ENCODE measurements at regions of chr3 and their contacts with region 1.

Region 1: DNA sequence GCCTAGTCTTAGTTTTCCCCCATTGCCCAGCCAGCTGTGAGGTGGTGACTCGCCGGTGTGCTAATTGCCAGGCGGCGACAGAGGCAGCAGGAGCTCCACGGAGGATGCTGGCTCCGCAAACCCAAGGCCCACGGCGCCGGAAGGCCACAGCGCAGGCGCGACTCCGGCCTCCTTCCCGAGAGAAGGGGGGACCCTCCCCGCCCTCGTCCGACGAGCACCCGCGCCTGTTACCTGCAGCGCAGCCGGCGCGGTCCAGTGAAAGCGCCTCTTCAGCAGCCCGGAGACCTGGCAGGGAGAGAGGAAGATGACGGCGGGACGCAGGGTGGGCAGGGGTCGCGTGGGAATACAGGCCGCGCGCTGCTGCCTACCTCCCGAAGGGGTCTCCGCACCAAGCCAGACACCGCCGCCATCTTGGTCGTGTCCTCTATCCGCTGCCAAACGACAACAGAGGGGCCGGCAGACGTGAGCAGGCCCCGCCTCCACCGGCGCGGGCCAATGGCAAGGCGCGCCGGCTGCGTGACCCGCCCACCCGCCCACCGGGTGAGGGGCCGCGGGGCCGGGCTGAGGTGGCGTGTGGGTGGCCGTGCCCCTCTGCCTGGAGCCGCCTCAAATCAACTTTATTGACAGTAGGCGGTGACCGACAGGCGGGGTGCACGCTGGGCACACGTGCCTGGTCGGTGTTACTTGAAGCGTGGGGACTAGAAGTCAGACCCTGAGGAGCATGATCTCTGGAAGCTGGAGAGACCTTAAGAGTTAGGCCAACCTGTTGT is at the start of gene PDHB:
- DNase-seq: peak; percentile 89
- H3K4me3 Mint-ChIP-seq: peak within 1 kb of the TSS; percentile 88
- H3K27ac Mint-ChIP-seq: peak within 1 kb of the TSS; percentile 91
- H3K4me1 Mint-ChIP-seq: peaks cover 29% of the 10 kb centered on the region
- H3K27me3 Mint-ChIP-seq: no peaks in the 10 kb centered on the region
- total RNA-seq, gene PDHB: 62.0 and 68.1 TPM in 2 replicates

Region 2: GRCh38 chr3:58008140-58009025 is 425.2 kb before region 1 on chr3 and contains the start of gene FLNB:
- intact Hi-C with region 1: loop called (anchors 10 kb)
- DNase-seq: peak; percentile 65
- H3K4me3 Mint-ChIP-seq: peak within 1 kb of the TSS; percentile 85
- H3K27ac Mint-ChIP-seq: peak within 1 kb of the TSS; percentile 70
- H3K4me1 Mint-ChIP-seq: peaks cover 39% of the 10 kb centered on the region
- H3K27me3 Mint-ChIP-seq: peaks cover 2% of the 10 kb centered on the region
- total RNA-seq, gene FLNB: 22.3 and 24.1 TPM in 2 replicates

Region 3: DNA sequence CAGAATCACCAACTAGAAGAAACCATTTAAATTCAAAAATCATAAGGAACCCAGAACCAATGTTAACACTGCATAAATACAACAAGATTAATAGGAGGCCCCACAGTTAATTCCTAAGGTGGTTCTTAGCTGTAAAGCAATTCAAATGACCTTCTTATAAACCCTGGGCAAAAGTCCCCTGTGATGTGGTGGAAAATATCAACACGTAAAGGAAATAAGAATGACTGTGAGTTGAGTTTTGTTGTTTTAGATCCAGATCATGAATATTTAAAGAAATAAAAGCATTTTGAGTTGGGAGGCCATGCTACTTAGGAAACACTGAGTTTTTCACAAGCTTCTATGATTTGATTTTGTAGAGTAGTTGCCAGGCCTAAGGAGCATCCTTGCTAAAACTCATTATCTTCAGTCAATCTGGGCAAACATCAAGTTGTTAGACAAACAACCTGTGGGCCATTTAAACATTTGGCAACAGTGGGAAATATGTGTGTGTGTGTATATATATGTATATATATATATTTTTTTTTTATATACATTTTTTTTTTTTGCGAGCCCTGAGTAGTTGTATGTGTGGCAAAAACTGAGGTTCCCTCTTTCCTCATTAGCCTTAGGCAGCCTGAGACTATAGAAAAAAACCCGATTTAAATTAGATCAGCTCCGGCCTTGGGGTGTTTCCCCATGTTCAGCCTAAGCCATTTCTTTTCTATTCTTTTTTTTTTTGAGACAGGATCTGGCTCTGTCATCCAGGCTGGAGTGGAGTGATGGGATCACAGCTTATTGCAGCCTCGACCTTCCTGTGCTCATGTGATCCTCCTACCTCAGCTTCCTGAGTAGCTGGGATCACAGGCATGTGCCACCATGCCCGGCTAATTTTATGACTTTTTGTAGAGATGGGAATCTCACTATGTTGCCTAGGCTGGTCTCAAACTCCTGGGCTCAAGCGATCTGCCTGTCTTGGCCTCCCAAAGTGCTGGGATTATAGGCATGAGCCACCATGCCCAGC is 108.9 kb before region 1 on chr3:
- intact Hi-C with region 1: loop called (anchors 1 kb)
- DNase-seq: peak; percentile 6
- H3K4me3 Mint-ChIP-seq: peak overlapping the region; percentile 6
- H3K27ac Mint-ChIP-seq: peak overlapping the region; percentile 86
- H3K4me1 Mint-ChIP-seq: peaks cover 31% of the 10 kb centered on the region
- H3K27me3 Mint-ChIP-seq: no peaks in the 10 kb centered on the region

Region 4: DNA sequence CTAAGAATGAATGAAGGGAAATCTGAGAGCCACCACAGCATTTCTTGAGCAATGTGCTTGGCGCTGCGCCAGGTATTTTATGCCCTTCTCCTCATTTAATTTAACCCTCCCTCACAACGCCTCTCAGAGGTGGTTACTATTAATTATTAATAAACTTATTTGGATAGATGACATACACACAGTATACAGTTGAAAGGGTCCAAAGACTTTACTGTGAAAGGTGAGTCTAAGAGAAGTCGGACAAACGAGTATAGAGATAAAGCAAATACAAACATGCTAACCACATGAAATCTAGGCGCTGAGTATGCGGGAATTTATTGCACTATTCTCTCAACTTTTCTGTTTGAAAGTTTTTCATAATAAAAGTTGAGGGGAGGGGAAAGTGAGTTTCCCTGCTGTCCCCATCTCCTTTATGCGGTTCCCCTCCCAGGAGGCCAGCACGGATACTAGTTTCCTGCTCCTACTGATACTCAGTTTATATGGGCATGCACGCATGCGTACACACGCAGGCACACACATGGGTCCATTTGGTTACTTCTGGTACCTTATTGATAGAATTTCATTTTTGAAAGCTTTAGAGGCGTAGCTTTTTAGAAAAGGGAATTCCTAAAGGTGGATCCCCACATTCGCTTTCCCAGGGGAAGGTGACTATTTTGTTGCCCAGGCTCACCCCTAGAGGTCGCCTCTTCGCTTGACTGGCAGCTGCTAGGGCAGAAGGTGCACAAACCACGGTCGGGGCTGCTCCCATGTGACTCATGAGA is 29.8 kb after region 1 on chr3:
- intact Hi-C with region 1: loop called (anchors 1 kb)
- DNase-seq: peak; percentile 71
- H3K4me3 Mint-ChIP-seq: no peak overlapping the region
- H3K27ac Mint-ChIP-seq: no peak overlapping the region
- H3K4me1 Mint-ChIP-seq: peaks cover 13% of the 10 kb centered on the region
- H3K27me3 Mint-ChIP-seq: peaks cover 17% of the 10 kb centered on the region

Region 5: DNA sequence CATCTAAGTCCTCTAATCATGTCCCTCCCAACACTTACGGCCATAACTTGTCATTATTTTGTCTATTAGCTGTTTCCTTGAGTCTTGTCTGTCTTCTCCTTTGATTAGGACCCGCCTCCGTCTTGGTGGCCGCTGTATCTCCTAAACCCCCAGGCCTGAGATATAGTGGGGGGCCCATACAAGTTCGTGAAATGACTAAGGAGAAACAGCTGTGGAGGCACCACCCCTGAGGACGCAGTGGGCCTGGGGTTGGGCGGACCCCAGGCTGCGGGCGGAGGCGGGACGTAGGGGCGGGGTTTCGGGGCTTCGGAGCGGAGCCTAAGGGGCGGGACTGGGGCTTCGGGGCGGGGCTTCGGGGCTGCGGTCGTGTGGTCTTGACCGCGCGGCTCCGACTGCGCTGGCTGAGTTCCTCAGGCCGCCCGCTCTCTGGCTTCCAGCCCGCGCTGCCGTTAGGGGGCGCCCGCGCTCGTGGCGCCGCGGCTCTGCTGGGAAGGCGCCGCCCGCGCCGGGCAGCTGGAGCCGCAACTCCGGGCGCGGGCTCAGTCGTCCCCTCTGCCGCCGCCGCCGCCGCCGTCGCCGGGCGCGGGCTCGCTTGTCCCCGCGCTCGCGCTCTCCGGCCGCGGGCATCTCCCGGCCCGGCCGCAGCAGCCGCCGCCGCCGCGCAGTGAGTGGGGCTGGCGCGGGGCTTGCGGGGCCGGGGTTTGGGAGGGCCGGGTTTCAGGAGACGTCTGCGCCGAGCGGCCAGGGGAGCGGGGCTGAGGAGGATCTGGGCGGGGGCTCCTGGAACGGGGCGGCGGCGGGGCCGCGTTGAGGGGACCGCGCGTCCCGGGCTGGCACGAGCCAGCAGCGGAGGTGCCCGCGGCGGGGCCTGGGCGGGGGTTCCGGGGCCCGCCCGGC is 58.2 kb after region 1 on chr3 and contains the start of gene KCTD6:
- intact Hi-C with region 1: loop called (anchors 1 kb)
- DNase-seq: peak; percentile 87
- H3K4me3 Mint-ChIP-seq: peak within 1 kb of the TSS; percentile 93
- H3K27ac Mint-ChIP-seq: peak within 1 kb of the TSS; percentile 85
- H3K4me1 Mint-ChIP-seq: peaks cover 54% of the 10 kb centered on the region
- H3K27me3 Mint-ChIP-seq: peaks cover 40% of the 10 kb centered on the region
- total RNA-seq, gene KCTD6: 7.0 and 8.9 TPM in 2 replicates

Region 6: DNA sequence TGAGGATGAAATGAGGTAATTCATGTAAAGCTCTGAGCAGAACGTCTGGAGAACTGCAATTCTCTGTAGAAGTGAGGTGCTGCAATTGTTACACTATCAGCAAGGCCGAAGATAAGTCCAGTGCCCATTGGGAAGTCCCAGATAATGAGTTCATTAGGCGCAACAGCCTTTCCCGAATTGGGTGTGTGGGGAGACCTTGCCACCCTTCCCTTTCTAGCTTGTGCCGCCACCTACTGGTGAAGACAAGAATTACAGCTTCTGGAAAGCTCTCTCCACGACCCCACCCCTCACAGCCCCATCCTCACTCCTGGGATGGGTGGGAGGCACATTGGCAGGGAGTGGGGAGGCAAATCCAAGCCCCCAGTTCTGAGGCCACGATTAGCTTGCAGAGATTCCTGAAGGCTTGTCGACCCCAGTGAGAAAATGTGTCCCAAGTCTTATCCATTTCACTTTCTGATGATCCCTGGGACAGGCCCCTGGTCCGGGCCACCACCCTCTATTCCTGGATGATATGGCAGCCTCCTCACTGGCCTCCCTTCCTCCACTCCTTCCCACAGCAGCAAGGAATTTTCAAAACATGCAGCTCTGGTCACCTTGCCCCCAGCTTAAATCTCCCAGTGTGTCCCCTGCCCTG is 196.6 kb after region 1 on chr3:
- intact Hi-C with region 1: loop called (anchors 1 kb)
- DNase-seq: peak; percentile 46
- H3K4me3 Mint-ChIP-seq: no peak overlapping the region
- H3K27ac Mint-ChIP-seq: no peak overlapping the region
- H3K4me1 Mint-ChIP-seq: no peaks in the 10 kb centered on the region
- H3K27me3 Mint-ChIP-seq: no peaks in the 10 kb centered on the region

Region 7: DNA sequence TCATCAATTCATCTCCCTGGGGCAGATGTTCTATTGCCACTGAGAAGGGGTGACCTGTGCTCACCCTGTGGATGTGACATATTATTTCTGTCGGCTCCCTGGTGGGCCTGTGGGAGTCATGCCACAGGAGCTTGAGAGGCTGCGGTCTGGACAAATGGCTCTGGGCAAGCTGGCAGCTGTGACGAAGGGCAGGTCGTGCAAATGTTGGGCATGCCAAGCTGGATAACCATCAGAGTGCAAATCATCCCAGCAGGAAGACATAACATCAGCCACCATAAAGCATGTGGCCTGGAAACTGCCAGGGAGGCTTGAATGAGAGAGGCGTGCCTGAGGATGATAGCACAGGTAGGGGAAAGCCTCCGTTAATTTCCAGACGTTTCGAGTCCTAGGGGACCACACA is 278.3 kb after region 1 on chr3:
- intact Hi-C with region 1: no loop called
- DNase-seq: no peak
- H3K4me3 Mint-ChIP-seq: no peak overlapping the region
- H3K27ac Mint-ChIP-seq: no peak overlapping the region
- H3K4me1 Mint-ChIP-seq: no peaks in the 10 kb centered on the region
- H3K27me3 Mint-ChIP-seq: no peaks in the 10 kb centered on the region

Measured in activated T-helper 1 cell treated with anti-CD3 and anti-CD28 coated beads, Interleukin-12 subunit alpha, Interleukin-12 subunit beta, Interleukin-2, Interleukin-4 antibody, amounts not matched to agents 30 ng/mL and 10 ng/mL and 1 ng/mL, durations not matched to agents 14 hours and 24 hours and 36 hours (primary cell).